ENCODE measurements at regions of chr1 and their contacts with region 1.

Region 1: GRCh38 chr1:77978969-77979876 is at the start of gene FUBP1:
- DNase-seq: peak; percentile 99
- H3K4me3 Mint-ChIP-seq: no peak within 1 kb of the TSS
- H3K27ac Mint-ChIP-seq: no peak within 1 kb of the TSS
- H3K4me1 Mint-ChIP-seq: peaks cover 23% of the 10 kb centered on the region
- H3K27me3 Mint-ChIP-seq: no peaks in the 10 kb centered on the region
- CTCF ChIP-seq: peak; percentile 68
- total RNA-seq, gene FUBP1: 156 and 169 TPM in 2 replicates

Region 2: GRCh38 chr1:77779529-77780281 is 199.5 kb before region 1 on chr1 and contains the start of gene MIGA1:
- CTCF ChIA-PET with region 1: interaction called, 3 read pairs
- POLR2A ChIA-PET with region 1: interaction called, 17 read pairs
- intact Hi-C with region 1: no loop called
- DNase-seq: peak; percentile 92
- H3K4me3 Mint-ChIP-seq: peak within 1 kb of the TSS; percentile 94
- H3K27ac Mint-ChIP-seq: peak within 1 kb of the TSS; percentile 84
- H3K4me1 Mint-ChIP-seq: peaks cover 4% of the 10 kb centered on the region
- H3K27me3 Mint-ChIP-seq: no peaks in the 10 kb centered on the region
- CTCF ChIP-seq: no peak
- total RNA-seq, gene MIGA1: 13.2 and 19.9 TPM in 2 replicates

Region 3: DNA sequence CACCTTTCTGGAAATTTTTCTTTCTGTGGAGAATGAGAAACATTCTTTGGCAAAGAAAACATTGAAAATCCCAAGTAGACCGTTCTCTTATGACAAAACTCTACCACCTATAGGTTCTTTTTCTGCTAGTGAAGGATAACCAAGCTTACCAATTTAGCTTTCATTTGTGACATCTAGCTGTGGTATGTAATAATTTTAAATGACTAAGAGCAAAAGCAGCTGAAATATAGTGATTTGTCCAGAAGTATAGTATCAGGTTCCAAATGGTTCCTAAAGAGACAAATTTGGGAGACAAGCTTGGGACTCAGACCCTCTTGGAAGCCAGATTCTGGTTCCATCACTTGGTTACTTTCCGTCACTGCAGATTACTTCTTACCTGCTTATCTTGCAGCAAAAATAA is 24.7 kb before region 1 on chr1:
- CTCF ChIA-PET with region 1: interaction called, 4 read pairs
- POLR2A ChIA-PET with region 1: interaction called, 37 read pairs
- intact Hi-C with region 1: no loop called
- DNase-seq: no peak
- H3K4me3 Mint-ChIP-seq: no peak overlapping the region
- H3K27ac Mint-ChIP-seq: no peak overlapping the region
- H3K4me1 Mint-ChIP-seq: no peaks in the 10 kb centered on the region
- H3K27me3 Mint-ChIP-seq: no peaks in the 10 kb centered on the region
- CTCF ChIP-seq: no peak

Region 4: DNA sequence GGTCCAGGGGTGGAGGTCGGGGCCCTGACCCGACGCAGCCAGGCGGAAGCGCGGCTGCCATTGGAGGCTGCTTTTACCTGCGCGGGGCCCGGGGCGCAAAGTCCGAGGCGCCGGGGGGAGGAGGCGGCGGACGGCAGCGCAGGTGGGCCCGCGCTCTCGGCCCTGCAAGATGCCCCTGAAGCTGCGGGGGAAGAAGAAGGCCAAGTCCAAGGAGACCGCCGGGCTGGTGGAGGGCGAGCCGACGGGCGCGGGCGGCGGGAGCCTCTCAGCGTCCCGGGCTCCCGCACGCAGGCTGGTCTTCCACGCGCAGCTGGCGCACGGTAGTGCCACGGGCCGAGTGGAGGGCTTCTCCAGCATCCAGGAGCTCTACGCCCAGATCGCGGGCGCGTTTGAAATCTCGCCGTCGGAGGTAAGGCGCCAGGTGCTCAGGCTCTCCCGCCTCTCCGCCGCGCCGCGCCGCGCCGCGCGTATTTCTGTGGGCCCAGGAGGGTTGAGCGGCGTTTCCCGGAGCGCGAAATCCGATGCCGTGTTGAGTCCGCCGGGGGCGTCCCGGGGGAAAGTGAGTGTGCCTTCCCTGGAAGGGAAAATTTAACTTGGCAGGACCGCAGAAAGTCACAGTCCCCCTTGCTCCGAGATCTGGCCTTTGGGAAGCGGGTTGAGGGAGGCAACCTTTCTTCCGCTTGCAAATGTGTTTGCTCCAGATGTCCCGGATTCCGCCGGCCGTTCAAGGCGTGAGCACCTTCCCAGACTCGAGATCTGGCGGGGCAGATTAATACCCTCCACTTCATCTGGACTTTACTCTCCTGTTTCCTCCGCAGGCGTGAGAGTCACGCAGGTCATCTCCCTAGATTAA is 66.9 kb after region 1 on chr1 and contains the start of gene GIPC2:
- CTCF ChIA-PET with region 1: no interaction called
- POLR2A ChIA-PET with region 1: no interaction called
- intact Hi-C with region 1: no loop called
- DNase-seq: no peak
- H3K4me3 Mint-ChIP-seq: no peak within 1 kb of the TSS
- H3K27ac Mint-ChIP-seq: no peak within 1 kb of the TSS
- H3K4me1 Mint-ChIP-seq: peaks cover under 1% of the 10 kb centered on the region
- H3K27me3 Mint-ChIP-seq: no peaks in the 10 kb centered on the region
- CTCF ChIP-seq: no peak
- total RNA-seq, gene GIPC2: 0.07 TPM in 1 of 2 replicates, not detected in the other

Region 5: DNA sequence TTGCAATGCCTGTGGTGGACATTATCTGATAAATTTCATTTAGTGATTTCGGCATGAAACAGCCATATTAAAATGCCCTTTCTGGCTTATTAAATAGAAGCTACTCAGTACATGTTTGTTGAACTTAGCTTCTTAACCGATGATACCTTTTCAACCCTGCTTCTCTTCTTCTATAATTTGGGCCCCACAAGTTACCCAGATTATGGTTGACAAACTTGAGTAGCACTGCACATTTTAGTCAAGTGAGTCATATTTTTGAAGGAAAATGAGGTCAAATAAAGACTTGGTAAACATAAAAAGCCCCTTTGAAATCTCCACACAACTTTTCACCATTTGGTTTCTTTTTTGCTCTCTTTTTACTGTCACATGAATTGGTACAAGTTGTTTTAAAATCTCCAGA is 100.4 kb after region 1 on chr1:
- CTCF ChIA-PET with region 1: no interaction called
- POLR2A ChIA-PET with region 1: no interaction called
- intact Hi-C with region 1: no loop called
- DNase-seq: no peak
- H3K4me3 Mint-ChIP-seq: no peak overlapping the region
- H3K27ac Mint-ChIP-seq: no peak overlapping the region
- H3K4me1 Mint-ChIP-seq: peaks cover 6% of the 10 kb centered on the region
- H3K27me3 Mint-ChIP-seq: no peaks in the 10 kb centered on the region
- CTCF ChIP-seq: no peak

Region 6: DNA sequence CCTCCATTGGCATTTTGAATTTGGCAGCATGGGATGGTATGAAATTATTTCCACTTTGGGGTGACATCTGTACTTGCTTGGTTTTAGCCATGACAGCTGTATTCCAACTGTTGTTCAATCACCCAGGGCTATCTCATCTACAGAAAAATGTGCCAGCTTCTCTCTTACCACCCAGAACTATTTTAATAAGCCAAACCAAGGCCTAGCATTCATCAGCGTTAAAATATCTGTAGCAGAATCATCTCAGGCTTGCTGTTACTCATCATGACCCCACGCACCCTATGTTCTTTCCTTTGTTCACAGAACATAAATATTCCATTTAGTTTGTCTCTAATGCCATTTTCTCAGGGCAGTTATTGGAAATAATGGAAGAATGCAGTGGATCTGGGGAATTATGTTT is 116.4 kb after region 1 on chr1:
- CTCF ChIA-PET with region 1: interaction called, 6 read pairs
- POLR2A ChIA-PET with region 1: interaction called, 19 read pairs
- intact Hi-C with region 1: loop called (anchors 5 kb)
- DNase-seq: peak; percentile 20
- H3K4me3 Mint-ChIP-seq: no peak overlapping the region
- H3K27ac Mint-ChIP-seq: peak overlapping the region; percentile 41
- H3K4me1 Mint-ChIP-seq: peaks cover 25% of the 10 kb centered on the region
- H3K27me3 Mint-ChIP-seq: no peaks in the 10 kb centered on the region
- CTCF ChIP-seq: no peak

Region 7: GRCh38 chr1:78370356-78370755 is 391.1 kb after region 1 on chr1:
- CTCF ChIA-PET with region 1: no interaction called
- POLR2A ChIA-PET with region 1: no interaction called
- intact Hi-C with region 1: no loop called
- DNase-seq: peak; percentile 56
- H3K4me3 Mint-ChIP-seq: peak overlapping the region; percentile 19
- H3K27ac Mint-ChIP-seq: peak overlapping the region; percentile 96
- H3K4me1 Mint-ChIP-seq: peaks cover 40% of the 10 kb centered on the region
- H3K27me3 Mint-ChIP-seq: no peaks in the 10 kb centered on the region
- CTCF ChIP-seq: no peak

Measured in MCF 10A (cell line).